ENCODE measurements at regions of chr3 and their contacts with region 1.

Region 1: DNA sequence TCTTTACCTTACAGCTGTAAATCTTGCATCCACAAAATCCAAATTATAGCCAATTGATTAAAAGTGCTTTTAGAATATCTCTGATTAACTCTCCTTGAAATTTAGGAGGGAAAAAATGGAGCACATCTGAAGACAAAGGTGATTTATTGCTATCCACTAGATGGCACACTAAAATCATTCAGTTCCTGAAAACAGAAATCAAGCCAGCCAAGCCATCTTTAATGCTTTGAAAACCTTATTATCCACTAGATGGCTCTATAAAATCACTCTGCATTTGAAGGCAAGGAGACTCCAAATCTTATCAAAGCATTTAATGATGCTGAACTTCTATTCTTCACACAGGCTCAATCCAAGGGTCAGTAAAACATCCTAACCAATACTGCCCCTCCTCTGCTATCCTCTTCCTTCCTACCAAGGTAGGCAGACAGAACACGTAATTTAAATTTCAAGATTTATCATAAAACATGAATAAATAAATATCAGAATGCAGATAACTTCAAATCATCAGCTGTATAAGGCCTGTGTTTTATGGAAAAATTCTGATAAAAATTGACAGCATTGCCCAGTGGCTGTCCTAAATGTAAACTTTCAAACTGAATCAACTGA is 48.4 kb downstream of the GOLIM4 start:
- DNase-seq: peak; percentile 53

Region 2: GRCh38 chr3:168165390-168166269 is 118.3 kb after region 1 on chr3:
- CTCF ChIA-PET with region 1: interaction called, 24 read pairs
- POLR2A ChIA-PET with region 1: no interaction called
- DNase-seq: peak; percentile 70

Measured in HEK293T (cell line).